ENCODE measurements at regions of chr3 and their contacts with region 1.

Region 1: DNA sequence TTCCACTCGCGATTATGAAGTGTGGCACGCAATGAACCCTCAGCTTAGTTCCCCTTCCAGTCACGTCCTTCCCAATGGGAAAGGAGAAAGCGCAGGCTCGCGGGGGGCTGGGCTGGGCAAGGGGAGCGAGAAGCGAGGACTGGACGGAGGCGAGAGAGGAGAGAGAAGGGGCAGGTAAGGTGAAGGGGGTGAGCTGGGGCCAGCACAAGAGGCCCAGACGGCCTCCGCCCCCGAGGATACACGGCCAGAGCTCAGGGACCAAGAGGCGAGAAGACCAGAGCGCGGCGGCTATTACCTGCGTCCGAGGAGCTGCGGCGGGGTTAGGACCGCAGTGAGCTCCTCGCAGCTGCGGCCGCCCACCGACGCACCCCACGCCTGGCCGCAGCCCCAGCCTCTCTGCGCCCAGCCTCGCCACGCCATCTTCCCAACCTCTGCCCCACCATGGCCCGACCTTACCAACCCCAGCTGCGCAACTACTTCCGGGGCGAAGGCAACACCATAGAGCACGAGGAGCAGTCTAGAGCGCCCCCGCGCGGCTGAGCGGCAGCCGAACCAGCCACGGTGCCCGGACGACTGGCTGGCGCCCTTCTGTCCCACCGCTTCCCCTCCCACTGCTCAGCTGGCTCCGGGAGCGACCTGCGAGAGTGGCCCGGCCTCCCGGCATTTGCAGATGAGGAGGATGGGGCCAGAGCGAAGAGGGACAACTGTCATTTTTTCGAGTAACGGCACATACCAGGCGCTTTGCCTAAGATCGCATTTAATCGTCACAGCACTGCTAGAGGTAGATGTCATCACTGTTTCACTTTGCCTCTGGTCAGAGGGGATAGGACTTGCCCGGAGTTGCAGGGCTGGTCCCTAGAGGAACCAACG is at the start of gene PARL:
- DNase-seq: peak; percentile 97
- ATAC-seq: peak; percentile 100
- H3K4me3 Mint-ChIP-seq: peak within 1 kb of the TSS; percentile 98
- H3K27ac Mint-ChIP-seq: peak within 1 kb of the TSS; percentile 95
- H3K4me1 Mint-ChIP-seq: peaks cover 32% of the 10 kb centered on the region
- H3K27me3 Mint-ChIP-seq: no peaks in the 10 kb centered on the region
- CTCF ChIP-seq: peak; percentile 92
- total RNA-seq, gene PARL: 80.0 to 83.5 TPM

Region 2: GRCh38 chr3:183460081-183461055 is 424.3 kb before region 1 on chr3:
- CTCF ChIA-PET with region 1: no interaction called
- POLR2A ChIA-PET with region 1: no interaction called
- intact Hi-C with region 1: loop called (anchors 10 kb)
- DNase-seq: no peak
- ATAC-seq: no peak
- H3K4me3 Mint-ChIP-seq: no peak overlapping the region
- H3K27ac Mint-ChIP-seq: no peak overlapping the region
- H3K4me1 Mint-ChIP-seq: no peaks in the 10 kb centered on the region
- H3K27me3 Mint-ChIP-seq: peaks cover 1% of the 10 kb centered on the region
- CTCF ChIP-seq: no peak

Region 3: GRCh38 chr3:183825456-183826161 is 59.1 kb before region 1 on chr3 and contains the start of gene MAP6D1:
- CTCF ChIA-PET with region 1: interaction called, 22 read pairs
- POLR2A ChIA-PET with region 1: interaction called, 6 read pairs
- intact Hi-C with region 1: no loop called
- DNase-seq: peak; percentile 70
- ATAC-seq: peak; percentile 80
- H3K4me3 Mint-ChIP-seq: peak within 1 kb of the TSS; percentile 80
- H3K27ac Mint-ChIP-seq: peak within 1 kb of the TSS; percentile 56
- H3K4me1 Mint-ChIP-seq: peaks cover 11% of the 10 kb centered on the region
- H3K27me3 Mint-ChIP-seq: no peaks in the 10 kb centered on the region
- CTCF ChIP-seq: peak; percentile 51
- total RNA-seq, gene MAP6D1: 3.8 to 4.3 TPM

Region 4: DNA sequence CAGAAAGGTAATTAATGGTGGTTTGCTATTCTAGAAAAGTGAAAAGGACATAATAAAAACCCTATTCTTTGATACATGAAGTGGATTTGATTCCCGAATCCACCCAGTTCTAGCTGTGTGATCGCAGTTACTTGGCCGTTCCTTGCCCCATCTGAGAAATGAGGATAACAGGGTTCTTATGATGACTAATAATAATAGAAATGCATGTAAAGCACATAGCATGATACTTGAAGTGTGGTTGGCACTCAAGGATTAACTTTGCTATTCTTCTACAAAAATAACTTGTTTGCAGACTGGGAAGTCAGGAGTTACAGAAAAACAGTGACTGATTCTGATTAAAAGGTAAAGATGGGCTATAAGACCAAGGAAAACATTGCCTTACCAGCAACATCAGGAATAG is 26.8 kb before region 1 on chr3:
- CTCF ChIA-PET with region 1: interaction called, 13 read pairs
- POLR2A ChIA-PET with region 1: interaction called, 3 read pairs
- intact Hi-C with region 1: no loop called
- DNase-seq: no peak
- ATAC-seq: no peak
- H3K4me3 Mint-ChIP-seq: no peak overlapping the region
- H3K27ac Mint-ChIP-seq: no peak overlapping the region
- H3K4me1 Mint-ChIP-seq: peaks cover 14% of the 10 kb centered on the region
- H3K27me3 Mint-ChIP-seq: no peaks in the 10 kb centered on the region
- CTCF ChIP-seq: no peak

Region 5: GRCh38 chr3:183895296-183895695 is 10.6 kb after region 1 on chr3:
- CTCF ChIA-PET with region 1: interaction called, 37 read pairs
- POLR2A ChIA-PET with region 1: interaction called, 7 read pairs
- intact Hi-C with region 1: no loop called
- DNase-seq: peak; percentile 37
- ATAC-seq: peak; percentile 94
- H3K4me3 Mint-ChIP-seq: no peak overlapping the region
- H3K27ac Mint-ChIP-seq: no peak overlapping the region
- H3K4me1 Mint-ChIP-seq: no peaks in the 10 kb centered on the region
- H3K27me3 Mint-ChIP-seq: peaks cover 6% of the 10 kb centered on the region
- CTCF ChIP-seq: peak; percentile 80

Measured in activated CD8-positive, alpha-beta T cell treated with anti-CD3 and anti-CD28 coated beads for 36 hours (primary cell).